Spleen (tissue), 13 donors: ENCODE measurements at regions of chr1 and their contacts with region 1.

Region 1: DNA sequence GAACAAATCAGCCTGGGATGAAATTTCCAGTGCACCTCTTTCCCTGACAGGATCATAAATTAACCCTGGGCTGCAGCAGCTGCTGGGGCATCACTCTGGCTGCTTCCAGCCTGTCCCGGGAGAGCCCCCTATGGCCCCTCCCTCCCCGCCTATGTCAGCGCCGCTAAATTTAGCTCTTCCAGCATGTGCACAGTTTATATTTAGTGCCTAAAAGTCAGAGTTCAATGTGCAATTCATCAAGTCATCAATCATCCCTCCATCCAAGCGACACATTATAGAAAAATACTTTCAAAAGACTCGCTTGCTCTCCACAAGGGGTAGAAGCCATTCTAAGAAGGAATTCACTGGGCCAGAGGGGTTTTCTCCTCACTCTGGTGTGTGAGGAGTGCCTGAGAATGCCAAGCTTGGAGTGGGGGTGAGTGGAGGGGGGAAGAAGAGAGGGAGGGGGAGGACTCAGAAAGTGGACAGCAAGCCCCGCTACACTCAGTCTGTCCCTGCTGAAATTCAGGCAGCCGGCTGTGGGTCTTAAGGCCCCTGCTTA is 37.4 kb downstream of the XCL1 start:
- DNase-seq: no peak
- H3K4me3 ChIP-seq: no peak overlapping the region
- H3K27ac ChIP-seq: no peak overlapping the region
- H3K4me1 ChIP-seq: peaks cover 0 to 16% (median 8%) of the 10 kb centered on the region in 6 donors
- H3K27me3 ChIP-seq: peaks cover 0 to 16% (median 0%) of the 10 kb centered on the region in 7 donors
- CTCF ChIP-seq: no peak
- POLR2A ChIP-seq: no peak

Region 2: GRCh38 chr1:169133801-169134502 is 520.2 kb after region 1 on chr1:
- intact Hi-C with region 1: loop called (anchors 10 kb)
- DNase-seq: no peak
- H3K4me3 ChIP-seq: no peak overlapping the region
- H3K27ac ChIP-seq: peak overlapping the region in 1 of 8 donors; percentile 7
- H3K4me1 ChIP-seq: no peaks in the 10 kb centered on the region
- H3K27me3 ChIP-seq: no peaks in the 10 kb centered on the region
- CTCF ChIP-seq: no peak
- POLR2A ChIP-seq: no peak